ENCODE measurements at regions of chrX and their contacts with region 1.

Region 1: DNA sequence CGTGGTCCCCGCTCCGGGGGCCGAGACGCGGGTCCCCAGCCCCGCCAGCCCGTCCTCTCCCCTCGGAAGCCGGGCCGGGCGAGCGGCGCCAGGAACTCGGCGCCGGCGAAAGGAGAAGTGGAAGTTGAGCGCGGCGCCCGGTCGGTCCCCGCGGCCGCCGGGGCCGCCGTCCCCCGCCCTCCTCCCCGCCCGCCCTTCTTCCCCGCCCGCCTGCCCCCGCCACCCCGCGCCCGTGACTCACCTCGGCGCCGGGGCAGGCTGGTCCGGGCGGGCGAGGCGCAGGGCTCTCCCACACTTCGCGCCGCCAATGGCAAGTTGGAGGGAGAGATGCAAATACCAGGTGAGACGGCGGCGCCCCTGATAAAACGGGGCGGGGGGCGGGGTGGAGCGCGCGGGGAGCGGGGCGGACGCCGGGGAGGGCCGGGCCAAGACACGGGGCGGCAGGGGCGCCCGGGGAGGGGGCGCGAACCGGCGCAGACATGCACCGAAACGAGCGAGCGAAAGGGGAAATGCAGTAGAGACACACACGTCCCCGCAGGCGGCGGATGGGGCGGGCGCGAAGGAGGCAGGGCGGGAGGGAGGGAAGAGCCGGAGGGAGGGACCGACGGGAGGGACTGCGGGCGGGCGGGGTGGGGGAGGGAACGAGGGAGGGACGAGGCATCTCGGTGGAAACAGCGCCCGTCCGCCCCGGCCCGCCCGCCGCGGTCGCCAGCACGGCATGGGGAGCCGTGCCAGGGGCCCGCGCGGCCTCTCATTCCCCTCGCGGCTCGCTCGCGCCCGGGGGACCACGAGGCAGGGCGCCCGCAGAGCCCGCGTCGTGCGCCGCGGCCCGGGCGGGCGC is at the start of gene ELF4:
- DNase-seq: peak; percentile 68
- ATAC-seq: peak; percentile 52
- H3K4me3 ChIP-seq: peak within 1 kb of the TSS; percentile 90
- H3K27ac ChIP-seq: peak within 1 kb of the TSS; percentile 87
- H3K4me1 ChIP-seq: peaks cover 34% of the 10 kb centered on the region
- H3K27me3 ChIP-seq: no peaks in the 10 kb centered on the region
- CTCF ChIP-seq: no peak
- total RNA-seq, gene ELF4: 23.4 and 23.8 TPM in 2 replicates

Region 2: GRCh38 chrX:130144509-130144908 is 33.9 kb after region 1 on chrX:
- CTCF ChIA-PET with region 1: no interaction called
- POLR2A ChIA-PET with region 1: no interaction called
- intact Hi-C with region 1: no loop called
- DNase-seq: peak; percentile 46
- ATAC-seq: peak; percentile 68
- H3K4me3 ChIP-seq: no peak overlapping the region
- H3K27ac ChIP-seq: no peak overlapping the region
- H3K4me1 ChIP-seq: peaks cover 14% of the 10 kb centered on the region
- H3K27me3 ChIP-seq: no peaks in the 10 kb centered on the region
- CTCF ChIP-seq: peak; percentile 42; the same call in 1 of the 2 replicates

Region 3: DNA sequence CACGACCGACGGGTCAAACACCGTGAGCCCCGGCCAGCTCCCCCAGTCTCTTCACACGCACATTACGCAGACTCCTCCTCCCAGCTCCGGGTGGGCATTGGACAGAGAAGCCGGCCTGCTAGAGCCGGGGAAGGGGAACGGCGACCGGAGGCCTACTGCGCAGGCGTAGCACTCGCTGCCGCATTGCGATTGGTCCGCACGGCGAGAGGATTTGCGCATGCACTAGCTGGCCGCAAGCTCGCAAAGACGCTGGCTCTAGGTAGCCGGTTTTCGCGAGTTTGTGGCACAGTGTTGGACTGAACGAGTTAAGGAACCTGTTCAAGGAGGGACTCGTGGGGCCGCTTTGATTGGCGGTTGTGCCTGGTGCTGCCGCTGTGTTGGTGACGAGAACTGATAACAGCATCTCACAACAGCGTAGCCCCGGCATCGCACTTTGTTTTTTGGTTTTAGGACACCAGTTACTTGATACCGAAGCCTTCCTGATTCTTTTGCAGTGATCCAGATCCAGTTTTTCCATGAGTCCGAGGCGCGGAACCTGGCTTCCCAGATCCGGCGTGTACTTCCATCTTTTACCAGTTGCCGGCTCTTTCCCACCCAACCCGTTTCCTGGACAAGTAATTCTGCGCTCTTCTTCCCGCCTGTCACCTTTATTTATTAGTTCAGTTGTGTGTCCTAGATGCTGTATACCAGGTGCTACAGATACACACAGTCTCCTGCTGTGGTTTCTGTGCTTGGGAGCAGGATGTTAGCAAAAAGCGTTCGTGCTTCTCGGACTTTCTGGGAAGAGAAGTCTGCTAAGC is 55.3 kb after region 1 on chrX and contains the start of gene AIFM1:
- CTCF ChIA-PET with region 1: no interaction called
- POLR2A ChIA-PET with region 1: no interaction called
- intact Hi-C with region 1: loop called (anchors 10 kb)
- DNase-seq: peak; percentile 94
- ATAC-seq: peak; percentile 91
- H3K4me3 ChIP-seq: peak within 1 kb of the TSS; percentile 77
- H3K27ac ChIP-seq: peak within 1 kb of the TSS; percentile 87
- H3K4me1 ChIP-seq: peaks cover 14% of the 10 kb centered on the region
- H3K27me3 ChIP-seq: no peaks in the 10 kb centered on the region
- CTCF ChIP-seq: no peak
- total RNA-seq, gene AIFM1: 51.8 and 57.7 TPM in 2 replicates